IMR-90 (cell line): ENCODE measurements at regions of chr17 and their contacts with region 1.

Region 1: DNA sequence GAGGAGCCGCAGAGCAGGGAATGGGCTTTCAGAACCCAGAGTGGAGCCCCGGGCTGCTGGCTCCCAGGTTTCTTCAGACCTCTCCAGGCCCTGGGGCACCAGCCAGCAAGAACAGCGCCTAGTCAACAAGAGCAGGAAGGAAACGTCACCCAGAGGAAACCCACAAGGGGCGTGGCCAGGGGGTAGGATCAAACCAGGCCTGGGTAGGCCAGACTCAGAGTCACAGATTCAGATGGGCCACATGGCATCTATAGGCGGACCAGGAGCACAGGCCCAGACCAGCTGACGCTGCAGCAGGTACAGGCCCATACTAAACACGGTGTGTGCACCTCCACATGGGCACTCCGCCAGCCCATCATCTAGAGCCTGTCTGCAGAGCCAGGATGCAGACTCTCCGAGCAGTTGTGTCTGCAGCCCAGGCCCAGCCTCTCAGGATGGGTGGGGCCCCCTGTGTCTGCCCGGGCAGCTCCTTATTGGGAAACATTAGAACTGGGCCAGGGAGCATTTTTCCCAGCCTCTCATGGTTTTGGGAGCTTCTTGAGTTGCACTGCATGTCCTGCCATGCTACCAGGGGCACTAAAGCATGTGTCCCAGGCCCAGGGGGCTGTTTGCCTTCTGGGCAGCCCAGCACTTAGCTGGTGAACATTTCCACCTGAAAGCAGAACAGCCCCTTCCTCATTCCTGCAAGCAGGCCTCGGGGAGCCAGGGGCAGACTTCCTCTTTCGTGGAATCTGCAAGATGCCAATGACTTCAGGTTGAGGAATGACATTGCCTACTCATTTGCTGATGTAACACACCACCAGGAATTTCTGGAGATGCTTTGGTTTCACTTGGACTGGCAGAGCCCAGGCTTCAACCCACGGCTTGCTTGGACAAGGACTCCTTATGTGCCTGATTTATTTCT is at the start of gene NLRP1:
- DNase-seq: peak; percentile 92
- ATAC-seq: peak; percentile 88
- H3K4me3 ChIP-seq: peak within 1 kb of the TSS; percentile 51
- H3K27ac ChIP-seq: peak within 1 kb of the TSS; percentile 92
- H3K4me1 ChIP-seq: peaks cover 20% of the 10 kb centered on the region
- H3K27me3 ChIP-seq: no peaks in the 10 kb centered on the region
- CTCF ChIP-seq: no peak
- POLR2A ChIP-seq: peak; percentile 75
- RAD21 ChIP-seq: no peak
- total RNA-seq, gene NLRP1: 134 and 172 TPM in 2 replicates

Region 2: GRCh38 chr17:5486204-5487124 is 98.2 kb before region 1 on chr17 and contains the start of gene MIS12:
- CTCF ChIA-PET with region 1: no interaction called
- POLR2A ChIA-PET with region 1: no interaction called
- dilution Hi-C with region 1: no loop called
- in situ Hi-C with region 1: no loop called
- intact Hi-C with region 1: loop called (anchors 1 kb)
- DNase-seq: peak; percentile 98
- ATAC-seq: peak; percentile 94
- H3K4me3 ChIP-seq: peak within 1 kb of the TSS; percentile 97
- H3K27ac ChIP-seq: peak within 1 kb of the TSS; percentile 98
- H3K4me1 ChIP-seq: peaks cover 2% of the 10 kb centered on the region; the same call in 1 of the 2 replicates
- H3K27me3 ChIP-seq: no peaks in the 10 kb centered on the region
- CTCF ChIP-seq: no peak
- POLR2A ChIP-seq: peak; percentile 88
- RAD21 ChIP-seq: peak; percentile 4; the same call in 1 of the 2 replicates
- total RNA-seq, gene MIS12: 11.7 and 18.1 TPM in 2 replicates

Region 3: GRCh38 chr17:5500589-5501391 is 83.8 kb before region 1 on chr17:
- CTCF ChIA-PET with region 1: no interaction called
- POLR2A ChIA-PET with region 1: no interaction called
- dilution Hi-C with region 1: no loop called
- in situ Hi-C with region 1: no loop called
- intact Hi-C with region 1: loop called (anchors 2 kb)
- DNase-seq: peak; percentile 94
- ATAC-seq: peak; percentile 96
- H3K4me3 ChIP-seq: peak overlapping the region; percentile 91
- H3K27ac ChIP-seq: peak overlapping the region; percentile 77
- H3K4me1 ChIP-seq: peaks cover 4% of the 10 kb centered on the region; the same call in 1 of the 2 replicates
- H3K27me3 ChIP-seq: no peaks in the 10 kb centered on the region
- CTCF ChIP-seq: no peak
- POLR2A ChIP-seq: peak; percentile 85
- RAD21 ChIP-seq: no peak

Region 4: DNA sequence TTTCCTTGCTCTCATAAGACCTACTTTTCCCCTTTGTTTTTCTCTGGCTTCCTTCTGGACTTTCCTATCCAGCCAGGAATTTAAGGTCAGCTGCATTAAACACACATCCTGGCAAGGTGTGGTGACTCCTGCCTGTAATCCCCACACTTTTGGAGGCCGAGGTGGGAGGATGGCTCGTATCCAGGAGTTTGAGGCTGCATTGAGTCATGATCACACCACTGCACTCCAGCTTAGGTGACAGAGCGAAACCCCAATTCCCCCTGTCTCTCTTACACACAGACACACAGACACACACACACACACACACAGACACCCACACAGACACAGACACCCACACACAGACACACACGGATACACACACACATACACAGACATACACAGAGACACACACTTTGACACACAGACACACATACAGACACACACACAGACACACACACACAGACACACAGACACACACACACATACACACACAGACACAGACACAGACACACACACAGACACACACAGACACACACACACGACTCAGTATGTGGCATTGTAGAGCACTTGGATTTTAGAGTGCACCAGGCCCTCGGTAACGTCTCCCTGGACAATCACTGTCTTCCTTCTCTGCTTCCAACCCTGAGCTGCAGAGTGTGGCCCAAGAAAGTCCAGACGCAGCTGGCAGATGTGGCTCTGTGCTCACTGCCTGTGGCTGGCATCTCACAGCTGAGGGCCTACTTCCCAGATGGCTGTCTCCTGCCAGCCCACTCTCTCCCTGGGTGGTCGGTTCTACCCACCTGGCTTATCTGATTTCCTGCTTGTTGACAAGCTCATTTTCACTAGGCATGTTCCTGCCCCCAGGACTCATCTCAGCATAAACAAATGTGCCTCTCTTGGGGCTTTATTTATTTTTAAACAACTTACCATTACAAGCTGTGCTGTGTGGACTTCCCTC is 39.3 kb before region 1 on chr17:
- CTCF ChIA-PET with region 1: no interaction called
- POLR2A ChIA-PET with region 1: no interaction called
- dilution Hi-C with region 1: no loop called
- in situ Hi-C with region 1: no loop called
- intact Hi-C with region 1: no loop called
- DNase-seq: peak; percentile 21
- ATAC-seq: peak; percentile 62
- H3K4me3 ChIP-seq: no peak overlapping the region
- H3K27ac ChIP-seq: no peak overlapping the region
- H3K4me1 ChIP-seq: peaks cover 8% of the 10 kb centered on the region; the same call in 1 of the 2 replicates
- H3K27me3 ChIP-seq: no peaks in the 10 kb centered on the region
- CTCF ChIP-seq: no peak
- POLR2A ChIP-seq: no peak
- RAD21 ChIP-seq: no peak

Region 5: DNA sequence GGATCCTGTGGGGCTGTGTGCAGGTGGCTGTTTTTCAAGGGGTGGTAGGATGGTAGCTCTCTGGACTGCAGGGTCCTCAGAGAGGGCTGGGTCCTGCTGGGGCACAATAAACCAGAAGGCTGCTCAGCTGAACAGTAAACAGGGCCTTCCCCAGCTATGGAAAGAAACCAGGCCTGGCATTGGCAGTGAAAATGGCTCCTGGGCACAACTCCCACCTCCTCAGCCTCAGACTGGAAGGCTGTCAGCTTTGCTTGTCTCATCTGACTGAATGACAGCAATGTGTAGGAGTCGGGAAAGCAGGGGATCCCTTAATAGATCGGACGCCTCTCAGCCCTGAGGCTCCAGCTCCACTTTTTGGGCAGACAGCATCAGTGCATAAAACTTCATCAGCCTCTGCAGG is 59.4 kb after region 1 on chr17:
- CTCF ChIA-PET with region 1: no interaction called
- POLR2A ChIA-PET with region 1: no interaction called
- dilution Hi-C with region 1: no loop called
- in situ Hi-C with region 1: no loop called
- intact Hi-C with region 1: no loop called
- DNase-seq: no peak
- ATAC-seq: no peak
- H3K4me3 ChIP-seq: no peak overlapping the region
- H3K27ac ChIP-seq: no peak overlapping the region
- H3K4me1 ChIP-seq: no peaks in the 10 kb centered on the region
- H3K27me3 ChIP-seq: no peaks in the 10 kb centered on the region; the same call in 1 of the 2 replicates
- CTCF ChIP-seq: no peak
- POLR2A ChIP-seq: no peak
- RAD21 ChIP-seq: no peak

Region 6: GRCh38 chr17:5706577-5707216 is 122.1 kb after region 1 on chr17:
- CTCF ChIA-PET with region 1: no interaction called
- POLR2A ChIA-PET with region 1: no interaction called
- dilution Hi-C with region 1: no loop called
- in situ Hi-C with region 1: no loop called
- intact Hi-C with region 1: loop called (anchors 1 kb)
- DNase-seq: peak; percentile 63
- ATAC-seq: peak; percentile 92
- H3K4me3 ChIP-seq: no peak overlapping the region
- H3K27ac ChIP-seq: no peak overlapping the region
- H3K4me1 ChIP-seq: no peaks in the 10 kb centered on the region
- H3K27me3 ChIP-seq: peaks cover 2% of the 10 kb centered on the region
- CTCF ChIP-seq: peak; percentile 68
- POLR2A ChIP-seq: no peak
- RAD21 ChIP-seq: peak; percentile 65

Region 7: GRCh38 chr17:5719976-5720375 is 135.3 kb after region 1 on chr17:
- CTCF ChIA-PET with region 1: no interaction called
- POLR2A ChIA-PET with region 1: no interaction called
- dilution Hi-C with region 1: no loop called
- in situ Hi-C with region 1: no loop called
- intact Hi-C with region 1: no loop called
- DNase-seq: no peak
- ATAC-seq: no peak
- H3K4me3 ChIP-seq: no peak overlapping the region
- H3K27ac ChIP-seq: no peak overlapping the region
- H3K4me1 ChIP-seq: no peaks in the 10 kb centered on the region
- H3K27me3 ChIP-seq: no peaks in the 10 kb centered on the region
- CTCF ChIP-seq: no peak
- POLR2A ChIP-seq: no peak
- RAD21 ChIP-seq: no peak

Region 8: GRCh38 chr17:6651357-6651918 is 1066.8 kb after region 1 on chr17 and contains the starts of genes C17orf100 and MED31:
- CTCF ChIA-PET with region 1: interaction called, 4 read pairs
- POLR2A ChIA-PET with region 1: no interaction called
- dilution Hi-C with region 1: no loop called
- in situ Hi-C with region 1: no loop called
- intact Hi-C with region 1: loop called (anchors 10 kb)
- DNase-seq: peak; percentile 85
- ATAC-seq: peak; percentile 98
- H3K4me3 ChIP-seq: peak within 1 kb of the TSS; percentile 90
- H3K27ac ChIP-seq: peak within 1 kb of the TSS; percentile 73
- H3K4me1 ChIP-seq: 0 out of 2 replicates have a peak, but pooled peaks cover 6% of the 10 kb centered on the region
- H3K27me3 ChIP-seq: peaks cover 20% of the 10 kb centered on the region
- CTCF ChIP-seq: no peak
- POLR2A ChIP-seq: peak; percentile 90
- RAD21 ChIP-seq: no peak
- total RNA-seq, gene C17orf100: 0.18 and 0.28 TPM in 2 replicates
- total RNA-seq, gene MED31: 5.6 and 8.1 TPM in 2 replicates

Region 9: GRCh38 chr17:6843241-6843880 is 1258.7 kb after region 1 on chr17:
- CTCF ChIA-PET with region 1: no interaction called
- POLR2A ChIA-PET with region 1: no interaction called
- dilution Hi-C with region 1: no loop called
- in situ Hi-C with region 1: no loop called
- intact Hi-C with region 1: loop called (anchors 10 kb)
- DNase-seq: peak; percentile 52
- ATAC-seq: peak; percentile 67
- H3K4me3 ChIP-seq: no peak overlapping the region
- H3K27ac ChIP-seq: no peak overlapping the region
- H3K4me1 ChIP-seq: no peaks in the 10 kb centered on the region
- H3K27me3 ChIP-seq: peaks cover 9% of the 10 kb centered on the region
- CTCF ChIP-seq: peak; percentile 50
- POLR2A ChIP-seq: no peak
- RAD21 ChIP-seq: peak; percentile 43